ENCODE measurements at regions of chr19 and their contacts with region 1.

Region 1: DNA sequence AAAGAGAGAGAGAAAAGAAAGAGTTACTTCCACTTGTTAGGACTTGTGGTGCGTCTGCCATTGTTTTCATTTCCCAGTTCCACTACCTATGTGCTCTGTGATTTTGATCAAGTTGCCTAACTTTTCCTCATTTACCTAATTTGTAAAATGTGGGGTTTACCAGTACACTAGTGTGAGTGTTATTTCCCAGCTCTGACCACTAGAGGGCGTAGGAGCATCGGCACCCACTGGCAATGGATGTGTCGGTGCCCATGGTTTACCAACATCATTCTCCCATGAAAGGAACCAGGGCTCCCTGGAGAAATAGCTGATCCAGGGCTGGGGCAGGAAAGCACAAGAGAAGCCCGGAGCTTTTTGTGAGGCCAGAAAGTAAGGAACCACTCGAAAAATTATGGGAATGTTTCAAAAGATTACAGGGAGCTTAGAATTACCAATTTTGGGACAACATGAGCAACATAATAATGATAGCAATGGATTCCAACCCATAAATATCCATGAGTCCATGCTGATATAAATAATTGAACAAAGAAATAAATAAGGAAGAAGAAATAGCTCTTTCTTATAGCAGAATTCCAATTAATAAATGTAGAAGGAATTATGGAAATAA is 15.1 kb upstream of the CEACAM4 start:
- DNase-seq: no peak
- ATAC-seq: peak; percentile 68

Region 2: DNA sequence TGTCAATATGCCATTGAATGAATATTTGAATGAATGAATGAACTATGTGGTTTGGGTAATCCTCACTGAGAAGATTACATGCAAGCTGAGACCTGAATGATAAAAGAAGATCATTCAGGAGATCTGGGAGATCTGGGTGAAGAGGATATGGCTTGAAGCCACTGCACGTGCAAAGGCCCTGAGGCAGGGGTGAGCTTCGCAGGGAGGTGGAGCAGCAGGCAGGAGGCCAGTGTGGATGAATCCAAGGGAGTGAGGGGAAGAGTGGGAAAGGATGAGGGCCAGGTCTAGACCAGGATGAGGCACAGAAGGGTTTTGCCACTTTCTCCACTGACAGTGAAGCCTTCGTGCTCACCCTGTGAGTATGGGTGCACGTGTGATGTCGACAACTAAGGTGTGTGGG is 149.1 kb before region 1 on chr19:
- intact Hi-C with region 1: no loop called
- DNase-seq: no peak
- ATAC-seq: no peak

Region 3: DNA sequence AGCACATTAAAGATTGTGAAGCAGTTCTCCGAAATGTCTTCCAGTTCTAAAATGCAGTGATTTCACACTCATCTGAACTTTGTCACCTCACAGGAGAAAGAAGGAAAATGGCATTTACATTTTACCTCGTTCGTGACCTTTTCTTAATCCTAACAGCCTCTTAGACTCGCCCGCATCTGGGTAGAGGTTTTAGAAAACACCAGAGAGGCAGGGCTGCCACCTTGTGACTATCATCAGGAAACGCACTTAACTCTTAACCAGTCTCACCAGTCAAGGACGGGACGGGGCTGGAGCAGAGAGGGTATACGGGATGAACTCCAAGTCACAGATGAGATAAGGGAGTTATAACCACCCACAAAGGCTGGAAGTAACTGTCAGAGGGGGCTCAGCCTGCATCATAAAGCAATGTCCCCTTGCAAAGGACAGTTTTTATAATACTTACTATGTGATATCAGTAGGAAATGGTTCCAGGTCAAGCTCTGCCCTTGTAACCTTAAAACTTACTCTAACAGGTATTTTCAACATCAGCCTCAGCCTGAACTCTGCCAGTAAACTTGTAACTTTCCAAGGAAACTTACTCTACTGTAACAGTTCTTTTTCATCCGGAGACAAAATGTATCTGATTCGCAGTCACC is 104.7 kb after region 1 on chr19:
- intact Hi-C with region 1: loop called (anchors 10 kb)
- DNase-seq: no peak
- ATAC-seq: peak; percentile 64